Activated naive CD4-positive, alpha-beta T cell treated with anti-CD3 and anti-CD28 coated beads for 36 hours (primary cell): ENCODE measurements at regions of chr1 and their contacts with region 1.

Region 1: DNA sequence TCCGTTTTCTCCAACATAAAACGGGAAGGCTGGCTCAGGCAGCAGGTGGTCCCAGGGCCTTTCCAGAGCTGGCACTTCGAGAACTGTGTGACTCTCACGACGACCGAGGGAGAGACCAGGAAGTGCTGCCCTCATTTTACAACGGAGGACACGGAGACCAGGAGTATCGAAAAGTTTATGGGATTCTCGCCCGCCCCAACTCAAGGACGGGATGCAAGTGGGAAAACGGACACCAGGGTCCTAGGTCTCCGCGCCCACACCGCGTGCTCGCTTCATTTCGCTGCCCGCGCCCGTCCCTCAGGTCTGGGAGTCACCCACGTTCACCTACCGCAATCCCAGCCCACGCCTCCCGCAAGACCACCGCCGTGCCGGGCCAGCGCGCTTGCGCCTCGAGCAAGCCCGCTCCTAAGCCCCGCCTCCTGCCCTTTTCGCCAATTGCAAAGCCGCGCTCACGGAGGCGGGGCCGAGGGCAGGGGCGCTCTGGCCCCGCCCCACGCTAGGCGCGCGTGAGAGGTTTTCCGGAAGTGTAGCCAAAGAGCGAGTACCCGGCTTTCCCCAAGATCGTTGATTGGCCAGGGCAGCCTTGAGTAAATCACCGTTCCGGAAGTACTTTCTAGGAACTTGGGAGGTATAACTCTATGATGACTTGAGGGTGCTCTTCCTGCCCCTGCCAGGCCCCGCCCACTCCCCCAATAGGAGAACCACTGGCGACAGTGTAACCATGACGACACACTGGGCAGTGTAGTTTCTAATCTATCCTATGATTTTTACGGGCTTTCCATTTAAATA is at the start of gene PARS2:
- DNase-seq: peak; percentile 96
- H3K4me3 Mint-ChIP-seq: peak within 1 kb of the TSS; percentile 94
- H3K27ac Mint-ChIP-seq: peak within 1 kb of the TSS; percentile 83
- H3K4me1 Mint-ChIP-seq: peaks cover 19% of the 10 kb centered on the region
- H3K27me3 Mint-ChIP-seq: no peaks in the 10 kb centered on the region
- total RNA-seq, gene PARS2: 3.0 to 3.1 TPM

Region 2: DNA sequence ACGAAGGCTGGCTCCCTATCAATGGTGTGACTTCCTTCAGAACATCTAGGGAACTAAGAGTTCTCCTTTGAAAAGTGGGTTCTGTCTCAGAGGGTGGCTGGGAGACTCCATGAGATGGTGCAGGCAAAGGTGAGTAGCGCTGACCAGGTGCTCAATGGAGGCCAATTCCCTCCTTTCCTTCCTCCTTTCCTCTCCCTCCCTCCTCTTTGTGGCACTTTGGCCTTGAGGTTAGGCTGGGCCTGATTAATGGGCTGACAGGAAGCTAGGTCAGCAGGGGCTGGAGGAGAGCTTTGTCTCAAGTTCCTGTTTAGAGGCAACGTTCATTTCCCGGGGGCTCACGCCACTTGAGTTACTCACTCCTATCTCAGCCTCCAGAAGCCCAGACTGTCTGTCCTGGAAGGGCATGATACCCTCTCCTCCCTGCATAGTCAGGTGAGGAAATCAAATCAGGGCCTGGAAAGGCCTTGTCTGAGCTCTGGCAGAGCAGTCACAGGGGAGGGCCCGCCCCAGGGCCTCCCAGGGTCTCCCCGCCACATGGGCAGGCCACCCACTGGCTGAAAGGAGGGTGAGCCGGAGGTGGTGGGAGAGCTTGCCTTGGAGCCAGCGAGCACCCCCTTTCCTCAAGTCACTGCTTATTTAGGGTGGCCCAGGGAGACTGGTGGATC is 299.7 kb before region 1 on chr1:
- CTCF ChIA-PET with region 1: no interaction called
- intact Hi-C with region 1: no loop called
- DNase-seq: no peak
- H3K4me3 Mint-ChIP-seq: no peak overlapping the region
- H3K27ac Mint-ChIP-seq: no peak overlapping the region
- H3K4me1 Mint-ChIP-seq: peaks cover 37% of the 10 kb centered on the region
- H3K27me3 Mint-ChIP-seq: no peaks in the 10 kb centered on the region

Region 3: DNA sequence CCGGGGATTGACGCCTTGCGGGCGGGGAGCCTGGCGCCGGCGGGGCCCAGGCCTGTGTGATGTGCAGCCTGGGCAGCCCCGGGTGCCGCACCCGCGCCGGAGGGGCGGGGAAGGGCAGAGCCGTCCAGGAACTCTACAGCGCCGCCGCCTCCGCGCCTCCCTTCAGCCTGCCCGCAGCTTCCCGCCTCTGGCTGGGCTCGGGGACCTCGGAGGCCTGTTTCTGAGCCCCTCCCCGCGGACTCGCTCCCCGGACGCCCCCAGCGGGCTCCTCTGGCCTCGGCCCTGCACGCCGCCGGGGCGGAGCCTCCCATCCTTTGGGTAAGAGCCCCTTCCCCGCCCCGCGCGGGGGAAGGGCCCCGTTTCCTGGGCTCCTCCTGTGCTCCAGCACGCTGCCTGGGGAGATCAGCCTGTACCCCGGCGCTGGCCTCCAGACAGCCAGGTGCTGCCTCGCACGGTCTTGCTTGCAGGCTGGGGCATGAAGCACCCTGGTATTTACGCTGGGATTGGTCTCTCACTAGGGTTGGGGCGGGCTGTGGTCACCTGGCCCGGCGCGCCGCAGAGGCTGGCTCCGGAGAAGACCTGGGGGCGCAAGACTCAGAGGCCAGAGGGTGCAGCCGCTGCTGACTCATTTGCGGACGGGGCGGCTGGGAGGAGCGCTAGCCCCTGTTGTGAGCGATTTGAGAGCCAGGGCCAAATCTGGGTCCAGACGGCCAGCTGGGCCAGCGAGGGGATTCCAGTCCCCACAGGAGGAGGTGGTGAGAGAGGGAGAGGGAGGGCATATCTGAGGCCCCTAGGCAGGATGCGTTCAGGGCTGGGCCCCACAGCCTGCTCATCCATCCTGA is 222.0 kb before region 1 on chr1:
- CTCF ChIA-PET with region 1: no interaction called
- intact Hi-C with region 1: loop called (anchors 1 kb)
- DNase-seq: peak; percentile 85
- H3K4me3 Mint-ChIP-seq: peak overlapping the region; percentile 70
- H3K27ac Mint-ChIP-seq: no peak overlapping the region
- H3K4me1 Mint-ChIP-seq: peaks cover 11% of the 10 kb centered on the region
- H3K27me3 Mint-ChIP-seq: no peaks in the 10 kb centered on the region

Region 4: GRCh38 chr1:54850737-54851136 is 86.4 kb after region 1 on chr1:
- CTCF ChIA-PET with region 1: no interaction called
- intact Hi-C with region 1: no loop called
- DNase-seq: no peak
- H3K4me3 Mint-ChIP-seq: no peak overlapping the region
- H3K27ac Mint-ChIP-seq: no peak overlapping the region
- H3K4me1 Mint-ChIP-seq: no peaks in the 10 kb centered on the region
- H3K27me3 Mint-ChIP-seq: no peaks in the 10 kb centered on the region

Region 5: DNA sequence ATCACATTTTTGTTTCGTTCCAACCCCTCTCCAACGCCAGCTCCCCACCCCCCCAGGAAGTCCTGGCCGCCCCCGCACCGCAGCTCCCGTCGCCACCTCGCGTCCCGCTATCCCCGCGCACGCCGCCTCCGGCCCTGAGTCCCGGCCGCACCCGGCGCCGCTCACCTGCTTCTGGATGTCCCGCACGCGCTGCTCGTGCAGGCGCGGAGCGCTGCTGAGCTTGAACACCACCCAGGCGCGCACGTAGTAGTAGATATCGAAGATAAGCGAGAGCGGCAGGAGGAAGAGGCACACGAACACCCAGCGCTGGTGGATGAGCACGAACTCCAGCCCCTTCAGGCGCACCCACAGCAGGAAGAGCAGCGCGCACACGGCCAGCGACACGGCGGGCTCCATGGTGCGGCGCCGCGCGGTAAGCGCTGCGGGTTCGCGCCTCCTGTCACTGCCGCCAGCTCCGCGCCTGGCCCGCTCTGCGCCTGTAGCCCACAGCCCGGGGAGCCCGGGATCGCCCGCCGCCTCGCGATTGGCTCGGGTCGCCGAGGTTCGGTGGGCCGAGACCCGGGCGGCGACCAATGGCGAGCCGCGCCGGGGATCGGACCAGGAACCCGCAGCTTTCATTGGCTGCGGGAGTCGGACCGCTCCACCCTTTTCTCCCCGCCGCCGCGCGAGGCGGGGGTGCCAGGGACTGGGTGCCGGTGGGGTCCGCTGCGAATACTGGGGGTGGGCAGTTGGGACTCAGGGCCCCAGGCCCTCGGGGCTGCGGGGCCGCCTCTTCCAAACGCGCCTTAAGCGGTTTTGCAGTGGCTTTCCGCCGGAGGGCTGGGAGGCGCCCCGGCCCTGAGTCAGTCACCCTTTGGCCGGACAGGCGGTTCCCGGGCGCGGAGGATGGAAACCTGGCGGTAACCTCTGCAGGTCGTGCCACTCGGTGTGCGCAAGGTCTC is 122.7 kb after region 1 on chr1 and contains the start of gene DHCR24:
- CTCF ChIA-PET with region 1: no interaction called
- intact Hi-C with region 1: loop called (anchors 1 kb)
- DNase-seq: peak; percentile 75
- H3K4me3 Mint-ChIP-seq: peak within 1 kb of the TSS; percentile 93
- H3K27ac Mint-ChIP-seq: peak within 1 kb of the TSS; percentile 80
- H3K4me1 Mint-ChIP-seq: peaks cover 31% of the 10 kb centered on the region
- H3K27me3 Mint-ChIP-seq: peaks cover 11% of the 10 kb centered on the region
- total RNA-seq, gene DHCR24: 56.3 to 64.8 TPM